ENCODE measurements at regions of chr14 and their contacts with region 1.

Region 1: GRCh38 chr14:67566908-67567307 is 33.2 kb downstream of the PIGH start:
- DNase-seq: no peak
- H3K4me3 ChIP-seq: no peak overlapping the region
- H3K27ac ChIP-seq: no peak overlapping the region
- H3K4me1 ChIP-seq: no peaks in the 10 kb centered on the region
- H3K27me3 ChIP-seq: no peaks in the 10 kb centered on the region; the same call in 1 of the 2 replicates

Region 2: DNA sequence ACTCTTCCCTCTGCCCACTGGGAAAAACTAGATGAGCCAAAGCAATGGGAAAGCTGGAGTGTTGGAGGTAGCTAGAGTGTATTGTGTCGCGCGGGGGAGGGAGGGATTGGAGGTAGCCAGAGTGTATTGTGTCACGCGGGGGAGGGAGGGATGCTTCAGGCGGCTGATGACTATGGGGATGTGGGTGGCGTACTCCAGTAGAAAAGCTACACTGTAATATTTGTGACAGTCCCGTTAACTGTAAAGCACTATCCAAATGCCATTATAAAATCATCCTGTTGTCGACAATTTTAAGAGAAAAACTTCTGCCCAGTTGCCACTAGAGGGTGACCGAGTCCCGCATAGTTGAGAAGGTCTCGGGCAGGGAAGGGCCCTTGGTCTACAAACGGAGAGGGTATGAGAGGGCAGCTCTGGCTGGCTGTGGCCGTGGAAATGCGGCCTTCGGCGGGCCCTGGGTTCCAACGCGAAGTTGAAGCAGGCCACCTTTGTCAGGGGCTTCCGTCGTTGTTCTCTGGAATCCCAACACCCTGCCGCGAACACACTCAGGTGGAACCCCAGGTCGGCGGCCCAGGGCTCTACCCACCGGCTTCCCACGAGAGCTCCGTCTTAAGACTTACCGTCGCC is 139.8 kb before region 1 on chr14:
- in situ Hi-C with region 1: loop called (anchors 10 kb)
- DNase-seq: peak; percentile 87
- H3K4me3 ChIP-seq: no peak overlapping the region
- H3K27ac ChIP-seq: no peak overlapping the region
- H3K4me1 ChIP-seq: peaks cover 7% of the 10 kb centered on the region; the same call in 1 of the 2 replicates
- H3K27me3 ChIP-seq: no peaks in the 10 kb centered on the region